ENCODE measurements at regions of chr1 and their contacts with region 1.

Region 1: GRCh38 chr1:58903514-58904298 is 119.9 kb upstream of the JUN start:
- DNase-seq: peak; percentile 95 to 96
- ATAC-seq: peak; percentile 93 to 99 (median 96)
- H3K4me3 ChIP-seq: peak overlapping the region in 9 of 10 donors; percentile 35 to 67 (median 58)
- H3K27ac ChIP-seq: peak overlapping the region; percentile 90 to 99 (median 96)
- H3K4me1 ChIP-seq: peaks cover 5 to 43% (median 27%) of the 10 kb centered on the region in 9 donors
- H3K27me3 ChIP-seq: no peaks in the 10 kb centered on the region
- CTCF ChIP-seq: peak in 3 of 9 donors; percentile 6 to 7 (median 6)

Region 2: DNA sequence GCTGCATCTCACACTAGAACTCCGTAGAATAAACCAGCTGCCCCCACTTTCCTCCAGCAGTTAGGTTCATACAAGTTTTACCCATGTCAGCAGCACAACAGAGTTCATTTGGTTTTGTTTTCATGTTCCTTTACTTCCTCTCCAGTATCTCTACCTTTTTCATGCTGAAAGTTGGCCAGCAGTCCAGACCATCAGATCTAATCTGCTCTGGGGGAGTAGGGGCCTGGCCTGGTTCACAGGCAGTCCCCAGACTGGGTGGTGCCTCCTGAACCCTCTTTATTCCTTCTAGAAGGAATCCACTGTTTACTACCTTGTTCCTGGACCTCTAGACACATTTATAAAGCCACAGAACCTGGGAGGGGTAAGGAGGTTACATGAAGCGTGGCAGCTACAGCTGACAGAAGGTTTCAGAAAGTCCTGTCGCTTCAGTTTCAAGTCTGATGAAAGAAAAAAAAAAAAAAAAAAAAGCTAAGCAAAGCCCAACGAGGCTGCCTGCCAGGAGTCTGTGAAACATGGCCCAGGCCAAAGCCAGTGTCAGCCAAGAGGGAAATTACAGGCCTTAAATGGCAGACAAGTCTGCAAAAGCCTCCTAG is 64.8 kb after region 1 on chr1:
- intact Hi-C with region 1: loop called in 1 of 10 experiments (anchors 1 kb)
- DNase-seq: peak; percentile 78 to 84
- ATAC-seq: peak; percentile 73 to 89 (median 84)
- H3K4me3 ChIP-seq: no peak overlapping the region
- H3K27ac ChIP-seq: peak overlapping the region; percentile 67 to 91 (median 85)
- H3K4me1 ChIP-seq: peaks cover 5 to 33% (median 26%) of the 10 kb centered on the region in 9 donors
- H3K27me3 ChIP-seq: no peaks in the 10 kb centered on the region
- CTCF ChIP-seq: peak in 2 of 9 donors; percentile 3 to 12

Region 3: GRCh38 chr1:59020151-59020997 is 116.7 kb after region 1 on chr1:
- intact Hi-C with region 1: loop called in 2 of 10 experiments (anchors 2 to 5 kb)
- DNase-seq: peak; percentile 24 to 63
- ATAC-seq: peak; percentile 46 to 88 (median 76)
- H3K4me3 ChIP-seq: peak overlapping the region in 8 of 10 donors; percentile 4 to 48 (median 35)
- H3K27ac ChIP-seq: peak overlapping the region; percentile 41 to 90 (median 82)
- H3K4me1 ChIP-seq: peaks cover 7 to 50% (median 33%) of the 10 kb centered on the region in 9 donors
- H3K27me3 ChIP-seq: no peaks in the 10 kb centered on the region
- CTCF ChIP-seq: no peak

Region 4: DNA sequence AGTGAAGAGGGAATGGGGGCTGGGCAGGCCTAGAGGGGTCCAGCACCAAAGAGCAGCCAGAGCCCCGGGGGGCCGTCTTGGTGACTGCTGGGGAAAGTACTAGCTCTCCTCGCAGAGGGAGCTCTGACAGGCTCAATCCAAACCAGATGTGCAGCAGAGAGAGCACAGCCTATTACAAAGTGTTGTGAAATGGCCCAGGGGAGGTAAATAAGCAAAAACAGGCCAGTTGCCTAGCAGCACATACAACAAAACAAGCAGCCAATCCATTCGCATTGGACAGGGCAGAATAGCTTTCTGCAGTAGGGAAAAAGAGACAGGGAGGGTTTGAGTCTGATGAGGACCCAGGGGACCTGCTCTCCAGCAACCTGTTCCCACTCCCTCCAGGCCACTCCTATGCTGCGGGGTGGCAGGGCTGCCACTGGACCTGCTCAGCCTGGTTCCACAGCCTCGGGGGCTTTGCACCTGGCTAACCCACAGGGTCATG is 153.5 kb after region 1 on chr1:
- intact Hi-C with region 1: loop called in 2 of 10 experiments (anchors 5 kb)
- DNase-seq: peak; percentile 80 to 87
- ATAC-seq: peak; percentile 89 to 93 (median 90)
- H3K4me3 ChIP-seq: no peak overlapping the region
- H3K27ac ChIP-seq: peak overlapping the region in 9 of 10 donors; percentile 6 to 66 (median 60)
- H3K4me1 ChIP-seq: peaks cover 7 to 37% (median 31%) of the 10 kb centered on the region in 9 donors
- H3K27me3 ChIP-seq: no peaks in the 10 kb centered on the region
- CTCF ChIP-seq: peak in 2 of 9 donors; percentile 30 to 32